ENCODE measurements at regions of chr1 and their contacts with region 1.

Region 1: DNA sequence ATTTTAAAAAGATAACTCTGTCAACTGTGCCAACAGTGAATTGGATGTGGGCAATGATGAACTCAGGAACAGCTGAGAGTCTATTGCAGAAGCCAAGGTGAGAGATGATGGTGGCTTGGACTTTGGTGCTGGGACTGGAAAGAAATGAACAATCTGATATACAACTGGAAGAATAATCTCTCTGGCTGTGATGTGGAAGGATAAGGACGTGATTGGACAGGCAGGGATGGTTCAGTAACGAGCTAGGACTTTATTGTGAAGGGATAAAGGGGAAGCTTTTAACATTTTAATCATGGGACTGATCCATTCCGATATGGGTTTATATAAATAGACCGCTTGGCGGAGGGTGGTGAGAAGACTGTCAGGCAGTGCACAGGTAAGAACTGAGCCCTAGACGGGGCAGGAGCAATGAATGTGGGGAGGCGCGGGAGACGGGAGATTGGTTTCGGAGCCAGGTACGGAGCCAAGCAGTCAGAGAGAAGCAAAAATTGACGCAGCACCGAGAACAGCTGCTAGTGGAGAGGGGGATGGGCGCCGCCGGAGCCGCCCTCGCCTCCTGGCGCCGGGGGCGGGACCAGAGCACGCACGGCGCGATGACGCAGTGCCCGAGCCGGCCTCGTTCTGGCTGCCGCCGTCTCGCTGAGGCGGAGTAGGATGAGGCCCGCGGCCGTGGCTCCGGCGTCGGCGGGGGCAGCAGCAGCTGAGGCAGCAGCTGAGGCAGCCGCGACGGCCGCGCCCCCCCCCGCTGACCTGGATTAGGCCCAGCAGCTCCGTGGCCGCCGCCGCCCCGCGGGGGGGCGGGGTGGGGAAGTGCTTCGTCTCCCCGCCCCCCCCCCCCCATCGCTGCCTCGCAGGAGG is at the start of gene RNF11:
- DNase-seq: peak; percentile 90
- H3K4me3 Mint-ChIP-seq: peak within 1 kb of the TSS; percentile 93
- H3K27ac Mint-ChIP-seq: peak within 1 kb of the TSS; percentile 85
- H3K4me1 Mint-ChIP-seq: peaks cover 34% of the 10 kb centered on the region
- H3K27me3 Mint-ChIP-seq: no peaks in the 10 kb centered on the region
- total RNA-seq, gene RNF11: 64.8 and 65.6 TPM in 2 replicates

Region 2: GRCh38 chr1:51296383-51297357 is 60.8 kb after region 1 on chr1:
- intact Hi-C with region 1: loop called (anchors 1 kb)
- DNase-seq: peak; percentile 70
- H3K4me3 Mint-ChIP-seq: peak overlapping the region; percentile 41
- H3K27ac Mint-ChIP-seq: peak overlapping the region; percentile 51
- H3K4me1 Mint-ChIP-seq: peaks cover 38% of the 10 kb centered on the region
- H3K27me3 Mint-ChIP-seq: no peaks in the 10 kb centered on the region